ENCODE measurements at regions of chr12 and their contacts with region 1.

Region 1: DNA sequence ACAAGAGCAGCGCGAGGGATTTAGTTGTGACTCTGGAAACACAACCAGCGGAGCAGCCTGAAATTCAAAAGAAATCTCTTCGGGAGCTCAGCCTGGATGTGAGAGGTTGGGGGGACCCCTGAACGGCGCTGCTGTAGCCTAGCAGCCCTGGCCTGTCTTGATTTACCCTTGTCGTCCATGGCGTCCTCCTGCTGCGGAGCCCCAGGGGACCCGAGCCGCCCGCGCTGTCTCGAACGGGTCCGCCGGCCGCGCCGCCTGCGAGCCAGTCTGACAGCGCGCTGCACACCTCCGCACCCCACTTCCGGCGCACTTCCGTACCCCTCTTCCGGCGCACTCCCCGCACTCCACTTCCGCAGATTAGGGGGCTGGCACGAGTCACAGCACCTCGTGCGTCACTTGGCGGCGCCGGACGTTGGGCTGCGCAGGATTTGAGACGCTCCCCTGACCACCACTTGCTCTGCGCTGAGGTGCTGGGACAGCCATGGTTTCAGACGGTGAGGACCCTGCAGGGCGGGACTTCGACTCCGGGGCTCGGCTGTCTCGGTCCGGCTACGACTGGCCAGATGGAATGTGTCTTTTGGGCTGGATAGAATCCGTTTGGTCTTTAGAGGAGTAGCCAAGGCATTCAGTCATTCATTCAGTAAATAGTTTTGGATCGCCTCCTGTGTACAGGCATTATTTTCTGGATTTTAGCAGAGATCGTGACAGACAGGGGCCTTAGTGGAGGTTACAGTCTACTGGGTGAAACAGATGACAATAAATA is at the starts of genes EIF2B1 and GTF2H3:
- DNase-seq: peak; percentile 99
- H3K4me3 Mint-ChIP-seq: peak within 1 kb of the TSS; percentile 97
- H3K27ac Mint-ChIP-seq: peak within 1 kb of the TSS; percentile 96
- H3K4me1 Mint-ChIP-seq: peaks cover 28% of the 10 kb centered on the region
- H3K27me3 Mint-ChIP-seq: no peaks in the 10 kb centered on the region
- total RNA-seq, gene EIF2B1: 51.7 to 61.9 TPM
- total RNA-seq, gene GTF2H3: 57.2 to 58.4 TPM

Region 2: GRCh38 chr12:123532808-123533649 is 100.5 kb before region 1 on chr12:
- CTCF ChIA-PET with region 1: no interaction called
- POLR2A ChIA-PET with region 1: no interaction called
- intact Hi-C with region 1: no loop called
- DNase-seq: peak; percentile 12
- H3K4me3 Mint-ChIP-seq: peak overlapping the region; percentile 73
- H3K27ac Mint-ChIP-seq: peak overlapping the region; percentile 62
- H3K4me1 Mint-ChIP-seq: peaks cover 17% of the 10 kb centered on the region
- H3K27me3 Mint-ChIP-seq: no peaks in the 10 kb centered on the region

Region 3: GRCh38 chr12:123601602-123602489 is 31.7 kb before region 1 on chr12 and contains the start of gene DDX55:
- CTCF ChIA-PET with region 1: interaction called, 3 read pairs
- POLR2A ChIA-PET with region 1: interaction called, 4 read pairs
- intact Hi-C with region 1: loop called (anchors 1 kb)
- DNase-seq: peak; percentile 90
- H3K4me3 Mint-ChIP-seq: peak within 1 kb of the TSS; percentile 84
- H3K27ac Mint-ChIP-seq: peak within 1 kb of the TSS; percentile 90
- H3K4me1 Mint-ChIP-seq: peaks cover 30% of the 10 kb centered on the region
- H3K27me3 Mint-ChIP-seq: no peaks in the 10 kb centered on the region
- total RNA-seq, gene DDX55: 44.0 to 45.1 TPM

Region 4: GRCh38 chr12:123670882-123671728 is 37.5 kb after region 1 on chr12 and contains the start of gene TCTN2:
- CTCF ChIA-PET with region 1: no interaction called
- POLR2A ChIA-PET with region 1: no interaction called
- intact Hi-C with region 1: loop called (anchors 1 kb)
- DNase-seq: peak; percentile 97
- H3K4me3 Mint-ChIP-seq: peak within 1 kb of the TSS; percentile 82
- H3K27ac Mint-ChIP-seq: no peak within 1 kb of the TSS
- H3K4me1 Mint-ChIP-seq: peaks cover 17% of the 10 kb centered on the region
- H3K27me3 Mint-ChIP-seq: no peaks in the 10 kb centered on the region
- total RNA-seq, gene TCTN2: 3.7 to 3.8 TPM

Region 5: DNA sequence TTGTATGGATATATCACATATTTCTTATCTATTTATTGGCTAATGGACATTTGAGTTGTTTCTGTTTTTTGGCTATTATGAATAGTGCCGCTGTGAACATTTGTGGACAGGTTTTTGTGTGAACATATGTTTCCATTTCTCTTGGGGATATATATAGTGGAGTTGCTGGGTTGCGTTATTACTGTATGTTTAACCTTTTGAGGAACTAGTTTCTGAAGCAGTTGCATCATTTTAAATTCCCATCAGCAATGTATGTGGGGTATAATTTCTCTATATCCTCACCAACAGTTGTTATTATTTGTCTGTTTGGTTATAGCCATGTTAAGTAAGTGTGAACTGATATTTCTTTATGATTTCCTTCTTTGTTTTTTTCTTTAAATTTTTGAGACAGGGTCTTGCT is 48.0 kb after region 1 on chr12:
- CTCF ChIA-PET with region 1: no interaction called
- POLR2A ChIA-PET with region 1: no interaction called
- intact Hi-C with region 1: no loop called
- DNase-seq: no peak
- H3K4me3 Mint-ChIP-seq: no peak overlapping the region
- H3K27ac Mint-ChIP-seq: no peak overlapping the region
- H3K4me1 Mint-ChIP-seq: peaks cover 2% of the 10 kb centered on the region
- H3K27me3 Mint-ChIP-seq: no peaks in the 10 kb centered on the region

Region 6: DNA sequence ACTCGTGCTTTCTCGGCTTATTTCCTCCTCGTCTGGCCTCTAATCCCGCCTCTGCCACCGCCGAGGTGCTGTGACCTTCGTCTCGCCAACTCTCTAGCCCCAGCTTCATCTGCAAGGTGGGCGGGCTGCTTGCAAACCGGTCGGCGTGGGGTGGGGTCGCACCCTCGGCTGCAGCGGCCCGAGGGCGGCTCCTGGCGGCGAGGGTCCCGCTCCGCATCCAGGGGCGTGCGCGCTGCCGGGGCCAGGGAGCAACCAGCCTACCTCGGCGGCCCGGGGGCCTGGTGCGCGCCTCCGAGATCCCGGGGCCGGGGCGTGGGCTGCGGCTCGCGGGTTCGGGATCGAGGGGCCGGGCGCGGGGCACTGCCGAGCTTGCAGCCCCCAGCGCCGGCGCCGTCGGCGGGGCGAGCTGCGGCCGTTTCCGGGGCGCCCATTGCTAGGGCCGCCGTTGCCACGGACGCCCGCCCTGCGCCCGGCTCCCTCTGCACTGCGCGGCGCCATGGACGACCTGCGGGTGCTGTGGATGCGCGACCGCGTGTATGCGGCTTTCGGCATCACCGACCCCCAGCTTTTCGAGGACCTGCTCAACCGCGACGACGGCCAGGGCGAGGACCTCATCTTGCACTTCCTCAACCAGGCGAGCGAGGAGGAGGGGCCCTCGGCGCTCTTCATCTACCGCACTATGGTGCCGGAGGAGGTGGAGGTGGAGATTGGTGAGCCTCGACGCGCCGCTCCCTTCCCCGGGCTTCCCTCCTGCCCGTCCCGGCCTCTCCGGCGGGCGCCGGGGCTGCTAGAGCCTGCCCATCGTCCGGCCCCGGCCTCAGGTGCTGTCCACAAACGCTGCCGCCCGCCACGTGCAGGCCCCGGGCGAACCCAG is 128.5 kb after region 1 on chr12 and contains the start of gene DNAH10:
- CTCF ChIA-PET with region 1: no interaction called
- POLR2A ChIA-PET with region 1: no interaction called
- intact Hi-C with region 1: loop called (anchors 10 kb)
- DNase-seq: peak; percentile 55
- H3K4me3 Mint-ChIP-seq: peak within 1 kb of the TSS; percentile 66
- H3K27ac Mint-ChIP-seq: no peak within 1 kb of the TSS
- H3K4me1 Mint-ChIP-seq: peaks cover 4% of the 10 kb centered on the region
- H3K27me3 Mint-ChIP-seq: peaks cover 4% of the 10 kb centered on the region
- total RNA-seq, gene DNAH10: 0.10 to 0.19 TPM

Measured in activated CD4-positive, alpha-beta memory T cell treated with anti-CD3 and anti-CD28 coated beads for 36 hours (primary cell).